Calu3 (cell line): ENCODE measurements at regions of chr18 and their contacts with region 1.

Region 1: DNA sequence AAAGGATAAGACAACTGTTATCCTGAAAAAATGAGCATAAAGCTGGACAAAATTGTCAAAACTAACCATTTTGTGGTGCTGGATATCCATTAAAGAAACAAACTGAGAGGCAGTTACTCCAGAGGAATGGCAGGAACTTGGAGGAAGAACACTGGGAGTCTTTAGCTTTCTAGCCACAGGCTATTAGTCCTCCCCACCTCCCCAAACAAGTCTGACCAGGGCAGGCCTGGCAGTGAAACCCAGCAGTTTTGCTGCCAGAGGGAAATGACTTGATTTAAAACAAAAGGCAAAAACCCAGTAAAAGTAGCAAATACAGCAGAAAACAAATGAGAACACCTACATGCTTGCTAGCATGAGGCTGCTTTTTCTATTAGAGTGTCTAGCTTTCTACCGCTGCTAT is 34.9 kb downstream of the OSBPL1A start:
- DNase-seq: peak; percentile 45
- H3K4me3 Mint-ChIP-seq: no peak overlapping the region
- H3K27ac Mint-ChIP-seq: no peak overlapping the region
- H3K4me1 Mint-ChIP-seq: peaks cover 6% of the 10 kb centered on the region
- H3K27me3 Mint-ChIP-seq: no peaks in the 10 kb centered on the region
- CTCF ChIP-seq: no peak

Region 2: DNA sequence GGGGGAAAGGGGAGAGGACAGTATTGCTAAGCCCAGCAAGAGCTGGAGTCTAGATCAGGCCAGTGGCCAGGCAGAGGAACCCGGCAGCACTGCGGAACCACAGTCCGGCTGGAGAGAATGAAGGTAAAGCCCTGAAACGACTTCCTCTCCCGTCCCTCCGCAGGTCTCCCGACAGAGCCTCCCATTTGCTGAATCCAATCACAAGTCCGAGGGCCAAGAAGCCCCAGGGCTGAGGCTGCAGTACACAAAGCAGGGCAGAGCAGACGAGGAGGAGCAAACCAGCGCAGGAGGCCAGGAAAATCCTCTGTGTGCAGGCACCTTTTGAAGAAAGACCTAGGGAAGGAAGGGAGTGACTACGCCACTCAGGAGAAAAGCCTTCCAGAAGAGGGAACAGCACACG is 69.5 kb before region 1 on chr18:
- CTCF ChIA-PET with region 1: no interaction called
- intact Hi-C with region 1: no loop called
- DNase-seq: no peak
- H3K4me3 Mint-ChIP-seq: no peak overlapping the region
- H3K27ac Mint-ChIP-seq: no peak overlapping the region
- H3K4me1 Mint-ChIP-seq: no peaks in the 10 kb centered on the region
- H3K27me3 Mint-ChIP-seq: no peaks in the 10 kb centered on the region
- CTCF ChIP-seq: no peak

Region 3: GRCh38 chr18:24432618-24433017 is 69.9 kb after region 1 on chr18:
- CTCF ChIA-PET with region 1: interaction called, 5 read pairs
- intact Hi-C with region 1: loop called (anchors 5 kb)
- DNase-seq: no peak
- H3K4me3 Mint-ChIP-seq: no peak overlapping the region
- H3K27ac Mint-ChIP-seq: no peak overlapping the region
- H3K4me1 Mint-ChIP-seq: no peaks in the 10 kb centered on the region
- H3K27me3 Mint-ChIP-seq: no peaks in the 10 kb centered on the region
- CTCF ChIP-seq: no peak